ENCODE measurements at regions of chrX and their contacts with region 1.

Region 1: GRCh38 chrX:70087857-70088630 is 25.8 kb downstream of the OTUD6A start:
- DNase-seq: peak; percentile 59
- ATAC-seq: peak; percentile 54
- H3K4me3 ChIP-seq: no peak overlapping the region
- H3K27ac ChIP-seq: peak overlapping the region; percentile 57
- H3K4me1 ChIP-seq: peaks cover 35% of the 10 kb centered on the region
- H3K27me3 ChIP-seq: no peaks in the 10 kb centered on the region
- CTCF ChIP-seq: no peak

Region 2: GRCh38 chrX:70046978-70047377 is 41.1 kb before region 1 on chrX:
- CTCF ChIA-PET with region 1: no interaction called
- POLR2A ChIA-PET with region 1: no interaction called
- intact Hi-C with region 1: loop called (anchors 2 kb)
- DNase-seq: peak; percentile 82
- ATAC-seq: peak; percentile 66
- H3K4me3 ChIP-seq: no peak overlapping the region
- H3K27ac ChIP-seq: peak overlapping the region; percentile 88
- H3K4me1 ChIP-seq: peaks cover 43% of the 10 kb centered on the region
- H3K27me3 ChIP-seq: no peaks in the 10 kb centered on the region
- CTCF ChIP-seq: no peak

Region 3: DNA sequence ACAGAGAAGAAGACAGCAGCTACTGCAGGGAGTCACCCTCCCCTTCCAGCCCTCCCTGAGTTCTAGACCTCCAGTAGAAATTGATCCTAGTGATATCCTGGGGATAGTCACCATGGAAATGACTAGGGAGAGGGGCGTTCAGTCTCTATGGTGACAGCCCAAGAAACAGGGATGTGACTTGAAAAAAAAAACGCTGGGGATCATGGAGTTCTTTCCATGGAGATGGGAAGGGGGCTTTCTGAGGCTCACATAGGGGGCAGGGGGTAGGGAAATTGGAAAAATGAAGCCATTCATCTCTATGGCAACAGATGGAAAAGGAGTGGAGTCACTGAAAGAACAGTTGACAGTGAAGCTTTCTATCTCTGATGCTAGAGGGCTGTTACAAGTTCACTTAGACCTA is 17.2 kb after region 1 on chrX:
- CTCF ChIA-PET with region 1: no interaction called
- POLR2A ChIA-PET with region 1: no interaction called
- intact Hi-C with region 1: no loop called
- DNase-seq: no peak
- ATAC-seq: no peak
- H3K4me3 ChIP-seq: no peak overlapping the region
- H3K27ac ChIP-seq: no peak overlapping the region
- H3K4me1 ChIP-seq: no peaks in the 10 kb centered on the region
- H3K27me3 ChIP-seq: no peaks in the 10 kb centered on the region
- CTCF ChIP-seq: no peak